GM12878 (cell line): ENCODE measurements at regions of chr5 and their contacts with region 1.

Region 1: GRCh38 chr5:54415896-54416601 is 39.5 kb upstream of the HSPB3 start:
- DNase-seq: no peak
- ATAC-seq: peak; percentile 46
- H3K4me3 ChIP-seq: no peak overlapping the region
- H3K27ac ChIP-seq: no peak overlapping the region
- H3K4me1 ChIP-seq: no peaks in the 10 kb centered on the region
- H3K27me3 ChIP-seq: no peaks in the 10 kb centered on the region; a peak in 1 of 4 replicates
- CTCF ChIP-seq: no peak
- EP300 ChIP-seq: no peak
- POLR2A ChIP-seq: no peak
- RAD21 ChIP-seq: no peak

Region 2: GRCh38 chr5:53425598-53426511 is 990.2 kb before region 1 on chr5:
- CTCF ChIA-PET with region 1: no interaction called
- POLR2A ChIA-PET with region 1: no interaction called
- RAD21 ChIA-PET with region 1: no interaction called
- SMC1A ChIA-PET with region 1: no interaction called
- in situ Hi-C with region 1: no loop called
- intact Hi-C with region 1: loop called (anchors 10 kb)
- DNase-seq: no peak
- ATAC-seq: peak; percentile 67
- H3K4me3 ChIP-seq: no peak overlapping the region
- H3K27ac ChIP-seq: no peak overlapping the region
- H3K4me1 ChIP-seq: no peaks in the 10 kb centered on the region
- H3K27me3 ChIP-seq: 0 out of 4 replicates have a peak, but pooled peaks cover 0 to 2% of the 10 kb centered on the region in 2 experiments
- CTCF ChIP-seq: peak in 2 of 3 experiments; percentile 21 to 42; a peak in 2 of 6 replicates
- EP300 ChIP-seq: no peak
- POLR2A ChIP-seq: no peak
- RAD21 ChIP-seq: peak; percentile 55

Region 3: DNA sequence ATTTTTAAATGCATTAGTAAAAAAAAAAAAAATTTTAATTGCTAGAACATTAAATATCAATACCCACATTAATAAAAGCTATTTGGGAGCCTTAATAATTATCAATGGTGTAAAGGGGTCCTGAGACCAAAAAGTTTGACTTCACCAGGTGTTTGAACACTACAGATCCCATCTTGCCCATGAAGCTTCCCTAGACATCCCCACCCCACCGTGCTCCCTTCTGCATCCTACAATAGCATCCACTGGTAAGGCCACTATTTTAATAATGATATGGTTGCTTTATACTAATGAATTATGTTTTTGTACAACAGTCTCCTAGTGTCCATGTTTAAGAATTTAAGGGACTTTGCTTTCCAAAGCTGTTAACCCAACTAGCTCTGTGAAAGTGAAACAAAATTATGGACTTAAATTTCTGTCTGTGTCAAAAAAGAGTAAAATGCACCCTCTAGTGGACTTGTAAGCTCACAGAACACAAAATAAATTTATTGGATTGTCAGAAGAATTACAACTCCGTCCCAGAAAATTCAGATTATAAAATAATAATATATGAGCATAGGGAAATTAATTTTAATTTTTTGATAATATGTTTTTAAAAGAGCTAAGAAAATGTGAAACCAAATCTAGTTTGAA is 181.6 kb before region 1 on chr5:
- CTCF ChIA-PET with region 1: interaction called, 15 read pairs
- POLR2A ChIA-PET with region 1: no interaction called
- RAD21 ChIA-PET with region 1: interaction called, 6 read pairs
- SMC1A ChIA-PET with region 1: interaction called, 10 read pairs
- in situ Hi-C with region 1: no loop called
- intact Hi-C with region 1: no loop called
- DNase-seq: no peak
- ATAC-seq: peak; percentile 72
- H3K4me3 ChIP-seq: no peak overlapping the region
- H3K27ac ChIP-seq: no peak overlapping the region
- H3K4me1 ChIP-seq: no peaks in the 10 kb centered on the region
- H3K27me3 ChIP-seq: no peaks in the 10 kb centered on the region
- CTCF ChIP-seq: peak; percentile 26 to 50 (median 50); a peak in 5 of 6 replicates
- EP300 ChIP-seq: no peak
- POLR2A ChIP-seq: no peak
- RAD21 ChIP-seq: peak; percentile 66

Region 4: DNA sequence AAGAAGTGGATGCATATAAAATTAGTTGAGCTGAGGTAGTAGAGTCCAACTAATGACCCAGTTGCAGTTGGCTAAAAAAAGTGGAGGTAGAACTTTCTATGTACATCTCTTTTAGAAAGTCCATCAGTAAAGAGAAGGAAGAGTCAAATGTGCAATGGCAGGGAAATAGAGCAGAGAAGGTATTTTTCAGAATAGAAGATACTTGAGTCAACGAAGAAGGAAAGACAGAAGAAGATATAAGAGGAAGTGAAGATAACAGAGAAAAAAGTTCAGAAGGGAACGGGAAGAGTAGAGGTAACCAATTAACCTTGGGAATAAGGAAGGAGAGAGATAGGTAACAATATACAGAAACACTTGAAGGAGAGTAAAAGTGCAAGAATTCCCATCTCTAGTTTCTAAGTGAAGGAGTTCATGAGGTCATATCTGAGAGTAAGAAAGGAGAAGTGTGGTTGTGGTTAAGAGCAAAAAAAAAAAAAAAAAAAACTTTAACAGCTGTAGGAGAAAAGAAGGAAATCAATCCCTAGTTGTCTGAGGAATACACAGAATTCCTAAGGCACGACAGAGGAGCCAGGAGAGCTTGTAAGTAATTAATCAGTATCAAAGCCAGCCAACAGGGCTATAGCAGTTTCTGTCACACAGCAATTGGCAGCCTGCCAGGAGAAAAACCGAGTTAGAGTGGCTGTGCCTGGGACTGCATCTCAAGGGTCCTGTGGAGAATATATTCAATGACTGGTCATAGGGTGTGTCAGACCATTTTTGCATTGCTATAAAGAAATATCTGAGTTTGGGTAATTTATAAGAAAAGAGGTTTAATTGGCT is 166.6 kb before region 1 on chr5:
- CTCF ChIA-PET with region 1: interaction called, 31 read pairs
- POLR2A ChIA-PET with region 1: no interaction called
- RAD21 ChIA-PET with region 1: interaction called, 6 read pairs
- SMC1A ChIA-PET with region 1: interaction called, 20 read pairs
- in situ Hi-C with region 1: loop called (anchors 5 kb)
- intact Hi-C with region 1: no loop called
- DNase-seq: no peak
- ATAC-seq: peak; percentile 85
- H3K4me3 ChIP-seq: no peak overlapping the region
- H3K27ac ChIP-seq: no peak overlapping the region
- H3K4me1 ChIP-seq: no peaks in the 10 kb centered on the region; the same call in none of the 2 replicates
- H3K27me3 ChIP-seq: no peaks in the 10 kb centered on the region
- CTCF ChIP-seq: no peak
- EP300 ChIP-seq: no peak
- POLR2A ChIP-seq: no peak
- RAD21 ChIP-seq: no peak

Region 5: GRCh38 chr5:54390015-54390414 is 26.0 kb before region 1 on chr5:
- CTCF ChIA-PET with region 1: interaction called, 13 read pairs
- POLR2A ChIA-PET with region 1: interaction called, 3 read pairs
- RAD21 ChIA-PET with region 1: interaction called, 7 read pairs
- SMC1A ChIA-PET with region 1: interaction called, 15 read pairs
- in situ Hi-C with region 1: no loop called
- intact Hi-C with region 1: no loop called
- DNase-seq: no peak
- ATAC-seq: no peak
- H3K4me3 ChIP-seq: no peak overlapping the region
- H3K27ac ChIP-seq: no peak overlapping the region
- H3K4me1 ChIP-seq: no peaks in the 10 kb centered on the region
- H3K27me3 ChIP-seq: no peaks in the 10 kb centered on the region
- CTCF ChIP-seq: no peak
- EP300 ChIP-seq: no peak
- POLR2A ChIP-seq: no peak
- RAD21 ChIP-seq: no peak

Region 6: DNA sequence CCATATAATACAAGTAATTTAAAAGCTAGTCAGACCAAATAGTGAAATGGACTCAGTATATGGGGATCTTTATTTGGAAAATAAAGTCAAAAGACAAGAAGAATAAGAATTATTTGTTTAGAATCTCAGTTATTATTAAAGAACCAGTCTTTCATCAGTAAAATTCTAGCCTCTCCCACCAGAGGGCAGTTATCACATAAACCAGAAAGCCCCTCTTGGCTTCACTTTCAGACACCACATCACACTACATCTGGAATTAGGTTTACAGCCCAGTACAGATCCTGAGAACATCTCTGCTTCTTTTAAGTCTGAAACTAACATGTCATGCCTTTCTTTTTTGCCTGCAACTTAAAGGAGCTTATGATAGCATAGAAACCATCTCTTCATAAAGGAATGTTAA is 27.2 kb after region 1 on chr5:
- CTCF ChIA-PET with region 1: interaction called, 10 read pairs
- POLR2A ChIA-PET with region 1: no interaction called
- RAD21 ChIA-PET with region 1: interaction called, 8 read pairs
- SMC1A ChIA-PET with region 1: interaction called, 8 read pairs
- in situ Hi-C with region 1: no loop called
- intact Hi-C with region 1: no loop called
- DNase-seq: no peak
- ATAC-seq: peak; percentile 73
- H3K4me3 ChIP-seq: no peak overlapping the region
- H3K27ac ChIP-seq: no peak overlapping the region
- H3K4me1 ChIP-seq: peaks cover 21% of the 10 kb centered on the region
- H3K27me3 ChIP-seq: no peaks in the 10 kb centered on the region; a peak in 2 of 4 replicates
- CTCF ChIP-seq: peak; percentile 37 to 51 (median 43)
- EP300 ChIP-seq: no peak
- POLR2A ChIP-seq: no peak
- RAD21 ChIP-seq: peak; percentile 56; the same call in 1 of the 2 replicates